Activated B cell treated with CpG ODN at 0.5 μM for 24 hours (primary cell): ENCODE measurements at regions of chr2 and their contacts with region 1.

Region 1: DNA sequence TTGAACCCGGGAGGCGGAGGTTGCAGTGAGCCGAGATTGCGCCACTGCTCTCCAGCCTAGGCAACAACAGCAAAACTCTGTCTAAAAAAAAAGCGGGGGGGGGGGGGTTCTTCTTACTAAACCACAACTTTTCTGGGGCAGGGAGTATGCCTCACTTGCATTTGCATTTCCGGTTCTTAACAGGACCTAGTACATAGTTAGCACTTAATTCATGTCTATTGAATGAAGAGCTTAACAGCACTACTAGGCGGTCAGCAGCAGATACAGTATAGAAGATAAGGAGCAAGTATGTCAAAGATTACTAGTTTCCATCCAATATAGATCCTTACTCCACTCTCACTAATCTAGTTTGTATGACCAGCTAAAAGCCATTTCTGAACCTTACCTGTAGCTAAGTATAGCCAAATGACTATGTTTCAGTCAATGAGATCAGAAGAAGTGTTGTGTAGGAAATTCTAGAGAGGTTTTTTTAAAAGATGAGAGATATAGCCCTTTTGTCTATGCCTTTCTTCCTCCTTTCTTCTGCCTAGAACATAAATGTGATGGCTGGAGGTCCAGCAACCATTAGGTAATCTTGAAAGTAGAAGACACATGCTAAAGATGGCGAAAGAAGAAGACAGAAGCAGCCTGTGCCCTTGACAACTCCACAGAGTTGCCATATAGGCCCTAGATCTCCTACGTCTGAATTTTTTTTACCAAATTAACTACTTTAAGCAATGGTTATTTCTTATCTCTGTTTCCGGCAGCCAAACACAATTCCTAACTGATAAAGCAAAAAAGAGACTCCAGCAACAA is 11.3 kb downstream of the HYCC2 start:
- DNase-seq: no peak
- ATAC-seq: no peak
- H3K4me3 Mint-ChIP-seq: no peak overlapping the region
- H3K27ac Mint-ChIP-seq: no peak overlapping the region
- H3K4me1 Mint-ChIP-seq: peaks cover 20% of the 10 kb centered on the region
- H3K27me3 Mint-ChIP-seq: no peaks in the 10 kb centered on the region
- CTCF ChIP-seq: no peak

Region 2: DNA sequence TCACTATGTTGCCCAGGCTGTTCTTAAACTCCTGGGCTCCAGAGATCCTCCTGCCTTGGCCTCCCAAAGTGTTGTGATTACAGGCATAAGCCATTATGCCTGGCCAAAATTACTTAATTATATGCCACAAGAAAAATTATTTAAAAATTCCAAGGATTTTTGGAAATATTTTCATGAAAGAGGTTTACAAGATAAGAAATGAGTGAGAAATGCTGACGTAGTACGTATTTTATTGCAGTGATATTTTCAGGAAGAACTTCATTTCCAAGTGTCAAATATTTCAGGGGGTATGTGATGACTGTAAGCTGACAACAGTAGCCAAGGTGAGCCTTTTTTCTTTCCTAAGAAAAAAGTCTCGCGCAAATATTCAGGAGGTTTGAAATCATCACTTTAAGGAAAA is 150.2 kb before region 1 on chr2:
- CTCF ChIA-PET with region 1: interaction called, 3 read pairs
- POLR2A ChIA-PET with region 1: interaction called, 10 read pairs
- intact Hi-C with region 1: no loop called
- DNase-seq: no peak
- ATAC-seq: no peak
- H3K4me3 Mint-ChIP-seq: no peak overlapping the region
- H3K27ac Mint-ChIP-seq: no peak overlapping the region
- H3K4me1 Mint-ChIP-seq: no peaks in the 10 kb centered on the region
- H3K27me3 Mint-ChIP-seq: no peaks in the 10 kb centered on the region
- CTCF ChIP-seq: no peak

Region 3: GRCh38 chr2:201018636-201019035 is 41.5 kb before region 1 on chr2:
- CTCF ChIA-PET with region 1: interaction called, 4 read pairs
- POLR2A ChIA-PET with region 1: no interaction called
- intact Hi-C with region 1: loop called (anchors 5 kb)
- DNase-seq: no peak
- ATAC-seq: no peak
- H3K4me3 Mint-ChIP-seq: no peak overlapping the region
- H3K27ac Mint-ChIP-seq: no peak overlapping the region
- H3K4me1 Mint-ChIP-seq: no peaks in the 10 kb centered on the region
- H3K27me3 Mint-ChIP-seq: no peaks in the 10 kb centered on the region
- CTCF ChIP-seq: no peak

Region 4: DNA sequence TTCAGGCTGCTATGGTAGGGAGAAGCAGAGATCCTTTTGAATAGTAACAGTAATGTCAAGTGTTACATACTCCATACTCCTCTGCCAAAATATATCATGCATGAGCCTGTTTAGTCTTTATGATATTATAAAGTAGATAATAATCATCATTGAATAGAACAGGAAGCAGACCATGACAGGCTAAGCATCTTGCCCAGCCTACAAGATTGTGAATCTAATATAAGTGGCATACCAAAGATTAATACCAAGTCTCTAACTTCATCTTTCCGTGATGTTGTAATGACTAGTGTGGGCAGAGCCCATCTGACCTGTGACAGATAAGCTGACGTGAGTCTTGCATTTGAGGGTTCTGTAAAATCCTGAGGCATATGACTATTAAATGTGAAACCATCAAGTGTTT is 24.7 kb after region 1 on chr2:
- CTCF ChIA-PET with region 1: no interaction called
- POLR2A ChIA-PET with region 1: no interaction called
- intact Hi-C with region 1: no loop called
- DNase-seq: no peak
- ATAC-seq: no peak
- H3K4me3 Mint-ChIP-seq: no peak overlapping the region
- H3K27ac Mint-ChIP-seq: no peak overlapping the region
- H3K4me1 Mint-ChIP-seq: no peaks in the 10 kb centered on the region
- H3K27me3 Mint-ChIP-seq: no peaks in the 10 kb centered on the region
- CTCF ChIP-seq: no peak